Naive thymus-derived CD4-positive, alpha-beta T cell (primary cell): ENCODE measurements at regions of chr3 and their contacts with region 1.

Region 1: GRCh38 chr3:9890249-9891071 is at the start of gene JAGN1:
- DNase-seq: peak; percentile 78 to 92 (median 88)
- ATAC-seq: peak; percentile 93
- H3K4me3 ChIP-seq: peak within 1 kb of the TSS; percentile 99
- H3K4me3 Mint-ChIP-seq: peak within 1 kb of the TSS; percentile 91 to 100 (median 97)
- H3K27ac ChIP-seq: peak within 1 kb of the TSS; percentile 100
- H3K27ac Mint-ChIP-seq: peak within 1 kb of the TSS; percentile 92 to 99 (median 99)
- H3K4me1 ChIP-seq: peaks cover 8 to 15% of the 10 kb centered on the region in 2 donors
- H3K4me1 Mint-ChIP-seq: peaks cover 25 to 48% (median 36%) of the 10 kb centered on the region in 7 donors
- H3K27me3 ChIP-seq: no peaks in the 10 kb centered on the region
- H3K27me3 Mint-ChIP-seq: peaks cover 0 to 2% (median 0%) of the 10 kb centered on the region in 5 donors
- total RNA-seq, gene JAGN1: 16.0 to 34.5 (median 28.1) TPM

Region 2: DNA sequence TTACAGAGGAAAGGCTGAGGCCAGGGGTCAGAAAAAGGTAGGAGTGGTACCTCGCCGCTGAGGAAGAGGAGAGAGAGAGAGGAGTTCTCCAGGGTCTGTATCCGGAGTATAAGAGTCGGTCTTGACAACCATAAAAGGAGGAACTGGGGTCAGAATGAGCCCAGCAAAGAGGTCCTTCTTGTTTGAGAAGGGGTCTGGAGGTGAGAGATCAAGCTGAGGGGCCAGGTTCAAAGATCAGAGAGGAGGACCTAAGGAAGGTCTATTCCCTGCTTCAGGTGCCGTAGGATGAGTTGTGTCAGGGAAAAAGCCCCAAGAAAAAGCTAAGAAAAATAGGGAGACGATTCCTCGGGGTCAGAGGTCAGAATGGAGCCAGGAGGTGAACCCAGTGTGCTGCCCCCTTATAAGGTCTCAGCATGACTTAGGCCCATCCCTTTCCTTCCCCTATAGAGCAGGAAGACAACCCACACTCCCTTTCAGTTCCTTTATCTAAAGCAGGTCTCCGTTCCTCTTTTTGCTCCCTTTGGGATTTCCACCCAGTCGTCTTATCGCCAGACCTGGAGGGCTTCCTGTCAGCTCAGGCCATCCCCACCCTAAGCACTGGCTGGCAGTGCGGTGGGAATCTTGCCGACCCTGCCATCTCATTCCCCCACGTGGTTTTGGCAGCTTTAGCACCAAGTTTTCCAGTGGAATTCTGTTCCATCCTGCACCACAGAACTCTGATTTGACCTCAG is 240.5 kb before region 1 on chr3:
- CTCF ChIA-PET with region 1: no interaction called
- POLR2A ChIA-PET with region 1: interaction called, 3 read pairs
- intact Hi-C with region 1: loop called (anchors 1 kb)
- DNase-seq: peak in 2 of 9 donors; percentile 4 to 5
- ATAC-seq: peak; percentile 15
- H3K4me3 ChIP-seq: peak overlapping the region; percentile 97
- H3K4me3 Mint-ChIP-seq: peak overlapping the region; percentile 86 to 98 (median 95)
- H3K27ac ChIP-seq: peak overlapping the region; percentile 85
- H3K27ac Mint-ChIP-seq: peak overlapping the region; percentile 91 to 98 (median 97)
- H3K4me1 ChIP-seq: peaks cover 15 to 19% of the 10 kb centered on the region in 2 donors
- H3K4me1 Mint-ChIP-seq: peaks cover 19 to 51% (median 37%) of the 10 kb centered on the region in 7 donors
- H3K27me3 ChIP-seq: no peaks in the 10 kb centered on the region
- H3K27me3 Mint-ChIP-seq: peaks cover 0 to 3% (median 0%) of the 10 kb centered on the region in 5 donors

Region 3: GRCh38 chr3:9809615-9810432 is 80.6 kb before region 1 on chr3 and contains the start of gene TTLL3:
- CTCF ChIA-PET with region 1: no interaction called
- POLR2A ChIA-PET with region 1: interaction called, 4 read pairs
- intact Hi-C with region 1: loop called in 1 of 2 experiments (anchors 5 kb)
- DNase-seq: peak; percentile 33 to 50 (median 43)
- ATAC-seq: peak; percentile 76
- H3K4me3 ChIP-seq: peak within 1 kb of the TSS; percentile 76
- H3K4me3 Mint-ChIP-seq: peak within 1 kb of the TSS; percentile 89 to 96 (median 92)
- H3K27ac ChIP-seq: peak within 1 kb of the TSS; percentile 90
- H3K27ac Mint-ChIP-seq: peak within 1 kb of the TSS; percentile 92 to 98 (median 96)
- H3K4me1 ChIP-seq: peaks cover 21 to 28% of the 10 kb centered on the region in 2 donors
- H3K4me1 Mint-ChIP-seq: peaks cover 31 to 41% (median 38%) of the 10 kb centered on the region in 7 donors
- H3K27me3 ChIP-seq: no peaks in the 10 kb centered on the region
- H3K27me3 Mint-ChIP-seq: no peaks in the 10 kb centered on the region
- total RNA-seq, gene TTLL3: 54.9 to 106 (median 68.0) TPM

Region 4: GRCh38 chr3:9915254-9916141 is 25.0 kb after region 1 on chr3:
- CTCF ChIA-PET with region 1: no interaction called
- POLR2A ChIA-PET with region 1: interaction called, 3 read pairs
- intact Hi-C with region 1: loop called in 1 of 2 experiments (anchors 1 kb)
- DNase-seq: peak in 6 of 9 donors; percentile 16 to 52 (median 24)
- ATAC-seq: peak; percentile 63
- H3K4me3 ChIP-seq: peak overlapping the region; percentile 48
- H3K4me3 Mint-ChIP-seq: peak overlapping the region; percentile 72 to 86 (median 79)
- H3K27ac ChIP-seq: peak overlapping the region; percentile 8
- H3K27ac Mint-ChIP-seq: no peak overlapping the region
- H3K4me1 ChIP-seq: peaks cover 0 to 11% of the 10 kb centered on the region in 2 donors
- H3K4me1 Mint-ChIP-seq: peaks cover 0 to 18% (median 8%) of the 10 kb centered on the region in 7 donors
- H3K27me3 ChIP-seq: no peaks in the 10 kb centered on the region
- H3K27me3 Mint-ChIP-seq: no peaks in the 10 kb centered on the region

Region 5: DNA sequence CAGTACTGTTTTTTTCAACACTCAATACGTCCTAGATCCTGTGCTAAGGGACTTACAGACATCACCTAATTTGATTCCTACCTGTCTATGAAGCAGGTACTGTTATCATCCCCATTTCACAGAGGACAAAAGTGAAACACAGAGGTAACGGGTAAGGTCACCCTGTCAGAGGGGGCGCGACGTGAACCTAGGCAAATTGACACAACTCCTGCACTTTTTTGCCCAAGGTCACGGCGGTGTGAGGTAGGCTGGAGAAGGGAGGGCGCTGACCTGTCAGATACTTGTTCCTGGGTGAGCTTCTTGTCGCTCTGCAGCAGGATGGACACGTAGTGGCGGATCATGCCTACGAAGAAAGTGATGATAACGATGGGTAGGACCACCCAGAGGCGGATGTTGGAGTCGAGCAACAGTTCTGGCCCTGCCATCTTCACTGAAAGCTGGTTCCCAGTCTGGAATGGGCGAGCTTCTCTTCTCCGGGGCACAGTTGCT is 95.8 kb after region 1 on chr3:
- CTCF ChIA-PET with region 1: no interaction called
- POLR2A ChIA-PET with region 1: interaction called, 10 read pairs
- intact Hi-C with region 1: loop called (anchors 1 to 2 kb)
- DNase-seq: no peak
- ATAC-seq: peak; percentile 52
- H3K4me3 ChIP-seq: peak overlapping the region; percentile 100
- H3K4me3 Mint-ChIP-seq: peak overlapping the region; percentile 95 to 99 (median 98)
- H3K27ac ChIP-seq: peak overlapping the region; percentile 96
- H3K27ac Mint-ChIP-seq: peak overlapping the region; percentile 95 to 100 (median 98)
- H3K4me1 ChIP-seq: peaks cover 13 to 15% of the 10 kb centered on the region in 2 donors
- H3K4me1 Mint-ChIP-seq: peaks cover 0 to 48% (median 35%) of the 10 kb centered on the region in 7 donors
- H3K27me3 ChIP-seq: no peaks in the 10 kb centered on the region
- H3K27me3 Mint-ChIP-seq: no peaks in the 10 kb centered on the region

Region 6: DNA sequence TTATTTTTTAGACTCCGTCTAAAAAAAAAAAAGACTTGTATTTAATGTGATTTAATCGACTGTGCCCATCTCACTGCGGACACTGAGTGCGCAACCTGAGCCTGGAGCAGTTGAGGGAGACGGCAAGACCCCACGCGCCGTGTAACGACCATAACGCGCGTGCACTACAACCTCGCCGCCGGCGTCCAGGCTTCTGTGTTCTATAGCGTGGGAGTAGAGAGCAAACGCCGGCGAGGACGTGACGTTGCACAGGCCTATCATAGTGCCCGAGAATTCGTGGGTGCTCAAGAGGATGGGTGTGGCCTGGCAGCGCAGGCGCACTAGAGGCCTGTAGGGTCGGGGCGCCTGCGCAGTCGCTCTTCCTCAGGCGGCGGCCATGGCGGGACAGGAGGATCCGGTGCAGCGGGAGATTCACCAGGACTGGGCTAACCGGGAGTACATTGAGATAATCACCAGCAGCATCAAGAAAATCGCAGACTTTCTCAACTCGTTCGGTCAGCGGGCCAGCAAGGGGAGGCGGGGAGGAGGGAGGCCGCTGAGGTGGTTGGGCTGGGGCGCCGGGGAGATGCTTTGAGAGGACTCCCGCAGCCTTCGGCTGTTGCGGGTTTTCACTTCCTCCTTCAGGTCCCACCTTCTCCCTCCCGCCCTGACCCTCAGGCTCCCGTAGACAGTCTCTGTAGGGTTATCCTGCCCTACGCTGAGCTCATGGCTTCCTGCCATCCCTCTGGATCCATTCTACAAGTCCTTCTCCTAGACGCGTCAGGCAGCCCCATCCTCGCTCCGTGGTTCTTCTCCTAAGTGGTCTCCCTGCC is 225.1 kb after region 1 on chr3 and contains the start of gene BRK1:
- CTCF ChIA-PET with region 1: no interaction called
- POLR2A ChIA-PET with region 1: no interaction called
- intact Hi-C with region 1: loop called in 1 of 2 experiments (anchors 1 kb)
- DNase-seq: peak; percentile 73 to 94 (median 91)
- ATAC-seq: peak; percentile 99
- H3K4me3 ChIP-seq: peak within 1 kb of the TSS; percentile 83
- H3K4me3 Mint-ChIP-seq: peak within 1 kb of the TSS; percentile 91 to 100 (median 98)
- H3K27ac ChIP-seq: peak within 1 kb of the TSS; percentile 85
- H3K27ac Mint-ChIP-seq: peak within 1 kb of the TSS; percentile 92 to 99 (median 98)
- H3K4me1 ChIP-seq: peaks cover 11 to 13% of the 10 kb centered on the region in 2 donors
- H3K4me1 Mint-ChIP-seq: peaks cover 23 to 48% (median 40%) of the 10 kb centered on the region in 7 donors
- H3K27me3 ChIP-seq: no peaks in the 10 kb centered on the region
- H3K27me3 Mint-ChIP-seq: peaks cover 0 to 2% (median 0%) of the 10 kb centered on the region in 5 donors
- total RNA-seq, gene BRK1: 40.9 to 117 (median 65.8) TPM

Region 7: GRCh38 chr3:10322352-10322710 is 431.9 kb after region 1 on chr3:
- CTCF ChIA-PET with region 1: no interaction called
- POLR2A ChIA-PET with region 1: interaction called, 4 read pairs
- intact Hi-C with region 1: loop called (anchors 1 kb)
- DNase-seq: peak in 3 of 9 donors; percentile 12 to 32 (median 17)
- ATAC-seq: no peak
- H3K4me3 ChIP-seq: no peak overlapping the region
- H3K4me3 Mint-ChIP-seq: peak overlapping the region in 5 of 10 donors; percentile 5 to 85 (median 32)
- H3K27ac ChIP-seq: no peak overlapping the region
- H3K27ac Mint-ChIP-seq: peak overlapping the region in 8 of 9 donors; percentile 0 to 97 (median 86)
- H3K4me1 ChIP-seq: peaks cover 12 to 22% of the 10 kb centered on the region in 2 donors
- H3K4me1 Mint-ChIP-seq: peaks cover 5 to 40% (median 30%) of the 10 kb centered on the region in 7 donors
- H3K27me3 ChIP-seq: no peaks in the 10 kb centered on the region
- H3K27me3 Mint-ChIP-seq: peaks cover 0 to 27% (median 9%) of the 10 kb centered on the region in 5 donors